ENCODE measurements at regions of chr2 and their contacts with region 1.

Region 1: GRCh38 chr2:208040199-208041171 is 15.2 kb upstream of the PLEKHM3 start:
- DNase-seq: peak; percentile 63
- H3K4me3 ChIP-seq: no peak overlapping the region
- H3K27ac ChIP-seq: no peak overlapping the region
- H3K4me1 ChIP-seq: no peaks in the 10 kb centered on the region
- H3K27me3 ChIP-seq: peaks cover 0 to 3% of the 10 kb centered on the region in 2 experiments
- CTCF ChIP-seq: peak; percentile 74 to 84
- POLR2A ChIP-seq: no peak

Region 2: DNA sequence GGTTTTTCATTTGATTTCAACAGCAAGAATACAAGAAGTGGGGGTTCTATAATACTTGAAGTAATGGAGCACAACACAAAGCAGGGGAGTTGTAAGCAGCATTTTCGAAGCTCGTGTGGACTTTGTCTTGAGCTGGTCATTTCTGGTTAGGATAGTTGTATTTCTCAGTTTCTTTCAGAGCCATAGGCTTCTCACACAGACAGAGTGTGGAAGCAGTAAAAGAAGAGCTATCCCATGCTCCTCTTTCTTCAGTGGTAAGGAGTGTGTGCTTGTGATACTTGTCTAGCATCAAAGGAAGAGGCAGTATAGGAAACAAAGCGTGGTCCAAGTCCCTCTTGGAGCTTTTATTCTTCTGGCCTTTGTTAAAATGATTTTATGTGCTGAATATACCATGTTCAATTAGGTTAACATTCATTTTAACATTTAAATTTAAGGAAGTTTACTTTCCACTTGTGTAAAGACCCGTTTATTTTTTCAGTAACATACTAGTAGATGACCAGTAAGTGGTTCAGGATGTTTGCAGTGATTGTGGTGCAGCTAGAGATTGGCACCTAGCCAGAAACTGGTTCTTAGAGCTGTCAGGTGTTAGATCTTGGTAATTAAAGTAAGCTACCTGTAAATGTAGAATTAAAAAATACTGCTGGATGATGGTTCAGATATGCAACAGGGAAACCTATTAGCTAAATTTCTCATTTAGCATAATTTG is 314.5 kb before region 1 on chr2:
- CTCF ChIA-PET with region 1: interaction called, 11 read pairs
- POLR2A ChIA-PET with region 1: no interaction called
- dilution Hi-C with region 1: no loop called
- intact Hi-C with region 1: no loop called
- DNase-seq: peak; percentile 62
- H3K4me3 ChIP-seq: no peak overlapping the region
- H3K27ac ChIP-seq: no peak overlapping the region
- H3K4me1 ChIP-seq: peaks cover 20% of the 10 kb centered on the region
- H3K27me3 ChIP-seq: no peaks in the 10 kb centered on the region
- CTCF ChIP-seq: no peak
- POLR2A ChIP-seq: no peak

Region 3: DNA sequence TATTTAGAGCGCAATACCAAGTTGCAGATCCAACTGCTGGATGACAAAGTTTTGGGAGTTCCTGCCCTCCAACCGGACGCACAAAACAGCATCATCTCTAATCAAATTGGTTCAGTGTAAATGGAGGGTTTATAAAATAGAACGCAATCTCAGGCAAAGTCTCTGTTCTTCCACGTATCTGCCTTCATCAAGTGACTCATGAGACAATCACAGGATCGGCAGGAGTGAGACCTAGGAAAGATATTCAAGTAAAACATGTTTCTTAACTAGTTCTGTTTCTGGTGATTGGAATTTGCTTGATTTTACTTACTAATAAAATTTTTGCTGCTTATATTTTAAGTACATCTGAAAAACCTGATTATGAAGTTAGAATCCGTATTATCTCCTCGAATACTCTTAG is 278.3 kb before region 1 on chr2:
- CTCF ChIA-PET with region 1: interaction called, 19 read pairs
- POLR2A ChIA-PET with region 1: no interaction called
- dilution Hi-C with region 1: no loop called
- intact Hi-C with region 1: loop called (anchors 1 kb)
- DNase-seq: no peak
- H3K4me3 ChIP-seq: no peak overlapping the region
- H3K27ac ChIP-seq: no peak overlapping the region
- H3K4me1 ChIP-seq: no peaks in the 10 kb centered on the region
- H3K27me3 ChIP-seq: no peaks in the 10 kb centered on the region
- CTCF ChIP-seq: no peak
- POLR2A ChIP-seq: no peak

Region 4: GRCh38 chr2:207967121-207967520 is 73.4 kb before region 1 on chr2:
- CTCF ChIA-PET with region 1: interaction called, 10 read pairs
- POLR2A ChIA-PET with region 1: no interaction called
- dilution Hi-C with region 1: no loop called
- intact Hi-C with region 1: no loop called
- DNase-seq: no peak
- H3K4me3 ChIP-seq: no peak overlapping the region
- H3K27ac ChIP-seq: no peak overlapping the region
- H3K4me1 ChIP-seq: no peaks in the 10 kb centered on the region
- H3K27me3 ChIP-seq: no peaks in the 10 kb centered on the region
- CTCF ChIP-seq: no peak
- POLR2A ChIP-seq: no peak

Region 5: GRCh38 chr2:208013285-208014178 is 27.0 kb before region 1 on chr2:
- CTCF ChIA-PET with region 1: interaction called, 16 read pairs
- POLR2A ChIA-PET with region 1: no interaction called
- dilution Hi-C with region 1: no loop called
- intact Hi-C with region 1: no loop called
- DNase-seq: peak; percentile 60
- H3K4me3 ChIP-seq: no peak overlapping the region
- H3K27ac ChIP-seq: peak overlapping the region; percentile 33
- H3K4me1 ChIP-seq: peaks cover 15% of the 10 kb centered on the region
- H3K27me3 ChIP-seq: no peaks in the 10 kb centered on the region
- CTCF ChIP-seq: no peak
- POLR2A ChIP-seq: no peak

Region 6: DNA sequence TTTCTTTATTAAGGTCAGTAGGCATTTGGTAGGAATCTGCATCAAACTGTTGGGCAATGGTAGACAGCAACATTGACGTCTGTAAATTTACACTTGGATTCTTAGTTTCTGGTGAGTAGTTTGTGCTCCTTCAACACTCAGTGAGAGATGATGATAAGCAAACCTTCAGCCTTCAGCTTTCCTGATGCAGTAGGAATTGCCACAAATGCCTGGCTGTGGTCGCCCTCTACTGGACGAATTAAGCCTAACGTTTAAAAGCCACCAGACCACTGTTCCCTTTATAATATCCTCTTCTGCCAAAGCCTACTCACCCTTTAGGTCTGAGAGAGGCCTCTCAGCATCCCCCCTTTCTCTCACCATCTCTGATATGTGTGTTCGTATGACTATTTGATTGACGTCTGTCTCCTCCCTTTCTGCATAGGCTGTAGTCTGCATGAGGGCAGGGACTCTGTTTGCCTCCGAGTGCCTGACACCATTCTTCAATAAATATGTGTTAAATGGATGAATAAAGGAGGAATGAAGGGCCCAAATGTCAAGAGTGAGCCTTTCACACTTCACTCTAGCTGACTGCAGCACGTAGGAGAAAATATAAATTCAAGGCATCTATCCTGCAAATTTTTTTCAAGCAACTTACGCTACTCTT is 31.9 kb after region 1 on chr2:
- CTCF ChIA-PET with region 1: interaction called, 26 read pairs
- POLR2A ChIA-PET with region 1: no interaction called
- dilution Hi-C with region 1: no loop called
- intact Hi-C with region 1: no loop called
- DNase-seq: peak; percentile 77
- H3K4me3 ChIP-seq: no peak overlapping the region
- H3K27ac ChIP-seq: no peak overlapping the region
- H3K4me1 ChIP-seq: no peaks in the 10 kb centered on the region
- H3K27me3 ChIP-seq: peaks cover 3 to 8% of the 10 kb centered on the region in 2 experiments
- CTCF ChIP-seq: peak; percentile 80 to 84
- POLR2A ChIP-seq: no peak

Region 7: DNA sequence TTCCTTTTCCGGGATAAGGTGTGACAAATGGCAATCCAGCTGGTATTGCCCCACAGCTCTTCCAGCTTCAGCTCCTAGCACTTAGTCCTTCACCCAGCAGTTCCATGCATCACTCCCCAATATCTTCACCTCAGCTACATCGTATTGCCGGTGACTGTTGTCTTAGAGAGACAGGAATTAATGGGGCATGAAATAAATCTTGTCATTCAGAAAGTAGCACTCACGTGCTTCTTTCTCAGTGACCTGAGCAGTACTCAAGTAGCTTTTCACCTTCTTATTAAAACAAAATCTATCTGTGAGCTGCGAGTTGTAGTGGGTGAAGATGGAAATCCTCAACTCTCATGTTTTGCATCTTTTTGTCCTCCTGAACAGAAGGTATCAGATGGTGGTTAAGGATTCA is 438.9 kb after region 1 on chr2:
- CTCF ChIA-PET with region 1: no interaction called
- POLR2A ChIA-PET with region 1: no interaction called
- dilution Hi-C with region 1: no loop called
- intact Hi-C with region 1: no loop called
- DNase-seq: no peak
- H3K4me3 ChIP-seq: no peak overlapping the region
- H3K27ac ChIP-seq: no peak overlapping the region
- H3K4me1 ChIP-seq: no peaks in the 10 kb centered on the region
- H3K27me3 ChIP-seq: no peaks in the 10 kb centered on the region
- CTCF ChIP-seq: no peak
- POLR2A ChIP-seq: no peak

Region 8: GRCh38 chr2:210007895-210008294 is 1967.4 kb after region 1 on chr2:
- CTCF ChIA-PET with region 1: no interaction called
- POLR2A ChIA-PET with region 1: no interaction called
- dilution Hi-C with region 1: no loop called
- intact Hi-C with region 1: no loop called
- DNase-seq: peak; percentile 19
- H3K4me3 ChIP-seq: no peak overlapping the region
- H3K27ac ChIP-seq: no peak overlapping the region
- H3K4me1 ChIP-seq: peaks cover 12% of the 10 kb centered on the region
- H3K27me3 ChIP-seq: no peaks in the 10 kb centered on the region
- CTCF ChIP-seq: no peak
- POLR2A ChIP-seq: no peak

Measured in endothelial cell of umbilical vein (primary cell).